H1 (cell line): ENCODE measurements at regions of chr4 and their contacts with region 1.

Region 1: DNA sequence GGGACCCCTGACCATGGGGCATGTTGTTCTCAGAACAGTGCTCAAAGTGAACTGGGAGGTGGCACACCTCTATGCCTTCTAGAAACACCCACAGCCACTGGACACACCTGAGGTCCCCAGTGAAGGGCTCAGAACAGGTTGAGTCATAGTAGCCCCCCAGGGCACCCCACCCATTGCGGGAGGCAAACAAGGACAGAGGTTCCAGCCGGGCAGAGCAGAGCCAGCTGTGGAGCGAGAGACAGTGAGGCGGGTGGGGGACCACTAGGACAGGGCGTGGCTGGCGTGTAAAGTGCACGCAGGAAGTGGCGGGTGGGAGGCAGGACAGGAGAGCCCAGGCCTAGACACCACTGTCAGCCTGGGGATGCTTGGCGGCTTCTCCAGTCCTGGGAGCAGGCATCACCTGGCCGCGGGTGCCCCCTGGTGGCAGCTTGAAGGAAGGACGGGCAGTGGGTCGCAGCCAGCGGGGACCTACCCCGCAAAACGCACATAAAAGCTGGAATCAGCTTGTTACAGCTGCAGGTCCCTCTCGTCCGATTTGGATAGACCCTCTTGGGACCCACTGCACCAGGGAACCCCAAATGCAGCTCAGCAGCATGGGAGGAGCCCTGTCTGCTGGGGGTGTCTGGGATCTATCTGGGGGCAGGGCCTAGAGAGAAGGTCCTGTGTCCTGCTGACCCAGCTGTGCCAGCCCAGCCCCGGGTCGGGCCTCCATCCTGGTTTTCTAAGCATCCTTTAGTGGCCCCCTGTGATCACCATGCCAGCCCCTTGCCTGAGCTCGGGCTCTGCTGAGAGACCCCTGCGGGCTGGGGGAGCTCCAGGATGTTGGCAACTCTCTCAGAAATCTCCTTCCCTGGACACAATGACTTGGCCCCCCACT is 57.6 kb downstream of the WFS1 start:
- DNase-seq: peak; percentile 38 to 98
- H3K4me3 ChIP-seq: no peak overlapping the region
- H3K27ac ChIP-seq: no peak overlapping the region
- H3K4me1 ChIP-seq: peaks cover 0 to 8% (median 3%) of the 10 kb centered on the region in 4 experiments; a peak in 3 of 7 replicates
- H3K27me3 ChIP-seq: no peaks in the 10 kb centered on the region
- CTCF ChIP-seq: peak in 2 of 3 experiments; percentile 97 to 98; a peak in 3 of 4 replicates
- EP300 ChIP-seq: no peak
- POLR2A ChIP-seq: no peak
- RAD21 ChIP-seq: peak; percentile 95 to 98

Region 2: GRCh38 chr4:6200011-6200921 is 127.0 kb before region 1 on chr4 and contains the start of gene JAKMIP1:
- CTCF ChIA-PET with region 1: interaction called, 13 read pairs
- POLR2A ChIA-PET with region 1: no interaction called
- DNase-seq: peak in 1 of 2 experiments; percentile 98
- H3K4me3 ChIP-seq: peak within 1 kb of the TSS; percentile 54 to 80 (median 56)
- H3K27ac ChIP-seq: no peak within 1 kb of the TSS
- H3K4me1 ChIP-seq: peaks cover 10 to 36% (median 19%) of the 10 kb centered on the region in 4 experiments
- H3K27me3 ChIP-seq: peaks cover 0 to 14% (median 9%) of the 10 kb centered on the region in 4 experiments; a peak in 5 of 7 replicates
- CTCF ChIP-seq: no peak
- EP300 ChIP-seq: no peak
- POLR2A ChIP-seq: no peak
- RAD21 ChIP-seq: no peak
- total RNA-seq, gene JAKMIP1: 3.9 and 4.4 TPM in 2 replicates

Region 3: DNA sequence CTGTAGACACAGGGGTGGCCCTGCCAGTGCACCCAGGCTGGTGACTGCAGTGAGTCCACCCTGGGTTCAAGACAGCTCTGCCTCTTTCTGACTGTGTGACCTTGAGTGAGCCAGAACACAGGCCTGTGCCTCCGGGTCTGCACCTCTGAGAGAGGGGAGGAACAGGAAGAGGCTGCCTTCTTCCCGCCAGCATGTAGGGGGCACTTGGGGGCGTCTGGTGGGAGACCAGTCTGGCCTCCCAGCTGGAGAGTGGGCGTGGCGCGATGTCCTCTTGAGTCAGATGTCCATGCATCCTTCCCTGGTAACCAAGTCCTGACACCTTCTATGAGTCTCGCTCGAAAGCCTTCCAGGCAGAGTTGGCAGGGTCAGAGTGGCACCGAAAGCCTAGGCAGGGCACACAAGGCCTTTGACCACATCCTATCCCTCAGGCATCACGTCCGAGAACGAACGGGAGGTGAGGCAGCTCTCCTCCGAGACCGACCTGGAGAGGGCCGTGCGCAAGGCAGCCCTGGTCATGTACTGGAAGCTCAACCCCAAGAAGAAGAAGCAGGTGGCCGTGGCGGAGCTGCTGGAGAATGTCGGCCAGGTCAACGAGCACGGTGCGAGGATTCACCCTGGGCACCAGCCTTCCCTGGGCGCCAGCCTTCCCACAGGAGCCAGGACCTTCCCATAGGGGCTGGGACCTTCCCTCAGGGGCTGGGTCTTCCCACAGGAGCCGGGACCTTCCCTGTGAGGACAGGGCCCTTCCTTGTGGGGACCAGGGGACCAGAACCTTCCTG is 36.3 kb before region 1 on chr4:
- CTCF ChIA-PET with region 1: interaction called, 13 read pairs
- POLR2A ChIA-PET with region 1: no interaction called
- DNase-seq: no peak
- H3K4me3 ChIP-seq: no peak overlapping the region
- H3K27ac ChIP-seq: no peak overlapping the region
- H3K4me1 ChIP-seq: no peaks in the 10 kb centered on the region
- H3K27me3 ChIP-seq: no peaks in the 10 kb centered on the region
- CTCF ChIP-seq: peak in 1 of 3 experiments; percentile 15; a peak in 1 of 4 replicates
- EP300 ChIP-seq: no peak
- POLR2A ChIP-seq: no peak
- RAD21 ChIP-seq: no peak

Region 4: DNA sequence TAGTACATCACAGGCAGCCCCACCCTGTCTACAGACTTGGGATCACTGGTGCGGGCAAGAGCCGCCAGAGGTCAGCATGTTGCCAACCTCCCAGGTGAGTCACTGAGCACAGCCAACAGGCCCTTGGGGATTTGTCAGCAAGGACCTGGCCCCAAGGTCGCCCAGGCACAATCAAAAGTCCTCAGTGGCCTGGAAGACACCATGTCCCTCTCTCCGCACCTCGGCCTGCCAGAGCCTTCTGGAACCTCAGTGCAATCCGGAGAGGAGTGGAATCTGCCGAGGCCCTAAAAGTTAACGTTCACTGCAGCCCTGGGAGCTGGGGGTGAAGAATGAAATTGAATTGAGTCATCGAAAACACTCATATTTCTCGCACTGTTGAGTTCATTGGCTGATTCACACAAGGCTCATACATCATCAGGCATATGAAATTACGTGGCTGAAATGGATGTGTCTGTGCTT is 16.7 kb after region 1 on chr4:
- CTCF ChIA-PET with region 1: interaction called, 175 read pairs
- POLR2A ChIA-PET with region 1: no interaction called
- DNase-seq: no peak
- H3K4me3 ChIP-seq: no peak overlapping the region
- H3K27ac ChIP-seq: no peak overlapping the region
- H3K4me1 ChIP-seq: peaks cover 0 to 11% (median 3%) of the 10 kb centered on the region in 4 experiments; a peak in 3 of 7 replicates
- H3K27me3 ChIP-seq: no peaks in the 10 kb centered on the region
- CTCF ChIP-seq: peak in 2 of 3 experiments; percentile 43 to 48; a peak in 3 of 4 replicates
- EP300 ChIP-seq: no peak
- POLR2A ChIP-seq: no peak
- RAD21 ChIP-seq: peak; percentile 58 to 67

Region 5: DNA sequence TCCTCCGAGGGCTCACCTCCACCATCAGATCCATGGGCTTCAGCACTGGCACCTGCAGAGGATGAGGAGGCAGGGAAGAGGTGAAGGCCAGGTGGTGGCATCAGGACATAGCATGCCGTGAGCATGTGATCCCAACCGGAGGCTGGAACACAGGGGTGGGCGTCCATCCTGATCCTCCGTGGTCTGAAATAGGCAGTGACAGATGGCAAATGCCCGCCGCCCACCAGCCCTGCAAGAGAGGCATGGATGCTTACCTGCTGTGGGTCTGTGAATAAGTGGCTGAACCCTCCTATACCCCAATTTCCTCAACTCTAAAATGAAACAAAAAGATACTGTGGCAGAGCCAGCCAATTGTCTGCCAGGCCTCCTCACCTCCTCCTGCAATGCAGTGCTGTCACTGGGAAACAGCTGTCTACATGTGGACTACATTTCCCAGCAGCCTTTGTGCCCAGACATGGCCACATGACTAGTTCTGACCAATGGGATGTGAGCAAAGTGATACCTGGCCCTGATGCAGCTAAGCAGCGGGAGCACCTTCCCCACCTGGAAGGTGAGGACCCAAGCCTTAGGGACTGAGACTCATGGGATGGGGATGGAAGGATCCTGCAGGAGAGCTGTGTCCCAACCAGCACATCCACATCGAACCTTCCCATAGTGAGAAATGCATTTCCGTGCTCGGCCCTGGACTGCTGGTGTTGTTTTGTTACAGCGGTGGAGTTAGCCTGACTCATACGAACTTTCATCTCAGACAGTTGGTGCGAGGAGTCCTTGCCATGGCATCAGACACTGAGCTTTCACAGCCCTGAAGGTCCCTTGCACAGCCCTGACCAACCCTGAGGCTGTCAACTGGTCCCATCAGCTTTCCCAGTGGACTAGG is 45.6 kb after region 1 on chr4:
- CTCF ChIA-PET with region 1: interaction called, 46 read pairs
- POLR2A ChIA-PET with region 1: no interaction called
- DNase-seq: no peak
- H3K4me3 ChIP-seq: no peak overlapping the region
- H3K27ac ChIP-seq: no peak overlapping the region
- H3K4me1 ChIP-seq: peaks cover 0 to 7% (median 2%) of the 10 kb centered on the region in 4 experiments; a peak in 3 of 7 replicates
- H3K27me3 ChIP-seq: no peaks in the 10 kb centered on the region
- CTCF ChIP-seq: no peak
- EP300 ChIP-seq: no peak
- POLR2A ChIP-seq: no peak
- RAD21 ChIP-seq: no peak

Region 6: GRCh38 chr4:6416518-6417286 is 89.4 kb after region 1 on chr4:
- CTCF ChIA-PET with region 1: interaction called, 11 read pairs
- POLR2A ChIA-PET with region 1: no interaction called
- DNase-seq: no peak
- H3K4me3 ChIP-seq: no peak overlapping the region
- H3K27ac ChIP-seq: no peak overlapping the region
- H3K4me1 ChIP-seq: peaks cover 0 to 23% (median 17%) of the 10 kb centered on the region in 4 experiments; a peak in 6 of 7 replicates
- H3K27me3 ChIP-seq: no peaks in the 10 kb centered on the region
- CTCF ChIP-seq: no peak
- EP300 ChIP-seq: no peak
- POLR2A ChIP-seq: no peak
- RAD21 ChIP-seq: no peak

Region 7: DNA sequence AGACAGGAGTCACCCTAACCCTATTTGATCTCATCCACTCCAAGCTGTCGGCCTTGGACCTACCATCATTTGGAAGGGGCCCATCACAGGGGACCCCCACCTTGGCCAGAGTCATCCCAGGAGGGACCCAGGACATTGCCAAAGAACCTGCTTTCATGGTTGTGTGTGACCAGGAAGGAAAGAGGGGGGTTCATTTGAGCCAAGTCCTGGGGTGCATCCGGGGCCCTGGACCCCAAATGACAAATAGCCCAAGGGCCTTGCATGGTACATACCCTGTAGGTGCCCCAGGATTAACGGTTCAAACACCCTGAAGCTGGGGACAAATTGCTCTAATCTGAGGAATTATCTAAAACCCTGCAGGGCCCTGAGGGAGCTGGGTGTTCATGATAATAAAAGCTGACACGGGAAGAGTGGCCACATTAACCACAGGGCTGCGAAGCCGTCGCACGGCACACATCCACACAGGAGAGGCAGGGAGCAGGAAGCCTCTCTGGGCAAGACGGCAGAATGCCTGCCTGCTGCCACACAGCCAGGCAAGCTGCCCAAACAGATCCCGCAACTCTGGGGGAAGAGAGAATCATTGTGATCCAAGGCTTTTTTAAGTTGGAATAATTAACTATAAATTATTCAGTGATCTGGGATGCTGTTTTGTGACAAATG is 173.3 kb after region 1 on chr4:
- CTCF ChIA-PET with region 1: no interaction called
- POLR2A ChIA-PET with region 1: no interaction called
- DNase-seq: peak in 1 of 2 experiments; percentile 19
- H3K4me3 ChIP-seq: no peak overlapping the region
- H3K27ac ChIP-seq: no peak overlapping the region
- H3K4me1 ChIP-seq: no peaks in the 10 kb centered on the region
- H3K27me3 ChIP-seq: no peaks in the 10 kb centered on the region; a peak in 1 of 7 replicates
- CTCF ChIP-seq: no peak
- EP300 ChIP-seq: no peak
- POLR2A ChIP-seq: no peak
- RAD21 ChIP-seq: no peak